PC-3 (cell line): ENCODE measurements at regions of chr17 and their contacts with region 1.

Region 1: GRCh38 chr17:65055348-65056261 is 935 bp downstream of the GNA13 start:
- DNase-seq: peak; percentile 50
- ATAC-seq: peak; percentile 51
- H3K4me3 ChIP-seq: peak overlapping the region; percentile 85
- H3K27ac ChIP-seq: peak overlapping the region; percentile 88
- H3K4me1 ChIP-seq: peaks cover 16% of the 10 kb centered on the region
- H3K27me3 ChIP-seq: no peaks in the 10 kb centered on the region
- CTCF ChIP-seq: no peak

Region 2: GRCh38 chr17:64968652-64969501 is 86.7 kb before region 1 on chr17:
- CTCF ChIA-PET with region 1: interaction called, 7 read pairs
- POLR2A ChIA-PET with region 1: no interaction called
- intact Hi-C with region 1: loop called (anchors 2 kb)
- DNase-seq: no peak
- ATAC-seq: no peak
- H3K4me3 ChIP-seq: no peak overlapping the region
- H3K27ac ChIP-seq: no peak overlapping the region
- H3K4me1 ChIP-seq: peaks cover 24% of the 10 kb centered on the region
- H3K27me3 ChIP-seq: no peaks in the 10 kb centered on the region
- CTCF ChIP-seq: no peak

Region 3: GRCh38 chr17:65027305-65027704 is 28.3 kb before region 1 on chr17:
- CTCF ChIA-PET with region 1: no interaction called
- POLR2A ChIA-PET with region 1: interaction called, 5 read pairs
- intact Hi-C with region 1: loop called (anchors 1 kb)
- DNase-seq: peak; percentile 96
- ATAC-seq: peak; percentile 83
- H3K4me3 ChIP-seq: no peak overlapping the region
- H3K27ac ChIP-seq: peak overlapping the region; percentile 81
- H3K4me1 ChIP-seq: peaks cover 37% of the 10 kb centered on the region
- H3K27me3 ChIP-seq: no peaks in the 10 kb centered on the region
- CTCF ChIP-seq: peak; percentile 68

Region 4: GRCh38 chr17:65093930-65094329 is 38.3 kb after region 1 on chr17:
- CTCF ChIA-PET with region 1: interaction called, 12 read pairs
- POLR2A ChIA-PET with region 1: no interaction called
- intact Hi-C with region 1: no loop called
- DNase-seq: no peak
- ATAC-seq: no peak
- H3K4me3 ChIP-seq: no peak overlapping the region
- H3K27ac ChIP-seq: no peak overlapping the region
- H3K4me1 ChIP-seq: peaks cover 26% of the 10 kb centered on the region
- H3K27me3 ChIP-seq: no peaks in the 10 kb centered on the region
- CTCF ChIP-seq: peak; percentile 46

Region 5: GRCh38 chr17:65122836-65123756 is 67.5 kb after region 1 on chr17:
- CTCF ChIA-PET with region 1: no interaction called
- POLR2A ChIA-PET with region 1: interaction called, 14 read pairs
- intact Hi-C with region 1: loop called (anchors 5 kb)
- DNase-seq: peak; percentile 86
- ATAC-seq: peak; percentile 39
- H3K4me3 ChIP-seq: peak overlapping the region; percentile 50
- H3K27ac ChIP-seq: peak overlapping the region; percentile 91
- H3K4me1 ChIP-seq: peaks cover 33% of the 10 kb centered on the region
- H3K27me3 ChIP-seq: no peaks in the 10 kb centered on the region
- CTCF ChIP-seq: no peak

Region 6: DNA sequence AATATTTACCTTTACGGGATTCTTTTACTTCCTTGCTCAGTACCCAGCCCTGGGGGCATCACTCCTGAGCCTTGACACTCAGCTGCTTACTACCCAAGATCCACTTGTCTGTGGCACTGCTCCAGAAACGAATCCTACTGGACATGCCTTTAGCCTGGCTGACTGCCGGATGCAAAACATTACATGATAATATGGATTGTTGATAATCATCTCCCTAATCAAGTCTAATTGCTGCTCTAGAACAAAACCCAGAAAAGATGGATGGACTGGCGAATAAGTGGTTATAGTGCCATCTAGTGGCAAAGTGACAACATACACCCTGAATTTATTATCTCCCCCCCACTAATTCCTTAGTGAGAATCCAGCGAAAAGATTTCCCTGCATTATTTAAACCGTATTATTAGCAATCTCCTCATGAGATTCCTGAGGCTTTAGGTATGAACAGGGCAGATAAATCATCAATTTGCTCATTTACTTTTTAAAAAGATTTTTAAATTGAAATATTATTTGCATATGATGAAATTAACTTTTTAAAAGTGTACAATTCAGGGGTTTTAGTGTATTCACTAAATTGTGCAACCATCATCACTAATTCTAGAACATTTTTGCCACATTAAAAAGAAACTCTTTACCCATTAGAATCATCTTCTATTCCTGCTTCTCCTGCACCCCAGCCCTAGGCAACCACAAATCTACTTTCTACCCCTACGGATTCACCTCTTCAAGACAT is 143.2 kb after region 1 on chr17:
- CTCF ChIA-PET with region 1: no interaction called
- POLR2A ChIA-PET with region 1: no interaction called
- intact Hi-C with region 1: loop called (anchors 2 kb)
- DNase-seq: peak; percentile 84
- ATAC-seq: peak; percentile 64
- H3K4me3 ChIP-seq: no peak overlapping the region
- H3K27ac ChIP-seq: no peak overlapping the region
- H3K4me1 ChIP-seq: 0 out of 2 replicates have a peak, but pooled peaks cover 6% of the 10 kb centered on the region
- H3K27me3 ChIP-seq: no peaks in the 10 kb centered on the region
- CTCF ChIP-seq: peak; percentile 96